Activated T-helper 1 cell treated with anti-CD3 and anti-CD28 coated beads, Interleukin-12 subunit alpha, Interleukin-12 subunit beta, Interleukin-2, Interleukin-4 antibody, amounts not matched to agents 30 ng/mL and 10 ng/mL and 1 ng/mL, durations not matched to agents 14 hours and 24 hours and 36 hours (primary cell): ENCODE measurements at regions of chr12 and their contacts with region 1.

Region 1: DNA sequence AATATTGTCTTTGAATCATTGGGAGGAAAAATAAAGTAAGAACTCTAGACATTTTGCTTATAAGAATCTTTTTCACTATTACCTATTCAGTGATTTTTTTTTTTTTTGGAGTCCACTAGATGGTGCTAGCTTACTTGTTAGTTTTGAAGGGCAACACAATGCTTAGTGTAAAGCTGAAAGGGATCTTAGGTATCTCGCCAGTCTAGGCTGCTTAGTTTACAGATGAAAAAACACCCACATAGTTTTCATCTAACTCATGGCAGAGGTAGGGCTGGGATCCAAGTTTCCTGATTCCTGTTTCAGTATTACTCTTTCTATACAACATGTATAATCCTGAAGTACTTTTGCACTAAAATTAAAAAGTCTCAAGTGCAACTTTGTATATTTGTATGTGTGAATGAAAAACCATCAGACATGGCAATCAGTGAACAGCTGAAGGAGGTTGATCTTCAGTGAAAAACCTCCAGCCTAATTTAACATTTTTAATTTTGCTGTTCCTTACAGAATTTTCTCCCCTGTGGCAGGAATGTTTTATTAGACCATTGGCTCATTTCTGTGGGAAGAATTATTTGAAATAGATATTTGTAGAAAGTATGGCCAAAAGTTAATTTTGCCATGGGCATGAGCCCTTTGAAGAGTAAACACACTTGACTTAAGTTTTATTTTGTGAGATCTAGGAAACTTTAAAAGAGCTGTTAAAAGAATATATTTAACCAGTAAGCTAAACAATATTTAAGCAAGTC is 40.7 kb downstream of the LRRIQ1 start:
- DNase-seq: no peak
- H3K4me3 Mint-ChIP-seq: no peak overlapping the region
- H3K27ac Mint-ChIP-seq: no peak overlapping the region
- H3K4me1 Mint-ChIP-seq: no peaks in the 10 kb centered on the region
- H3K27me3 Mint-ChIP-seq: no peaks in the 10 kb centered on the region

Region 2: DNA sequence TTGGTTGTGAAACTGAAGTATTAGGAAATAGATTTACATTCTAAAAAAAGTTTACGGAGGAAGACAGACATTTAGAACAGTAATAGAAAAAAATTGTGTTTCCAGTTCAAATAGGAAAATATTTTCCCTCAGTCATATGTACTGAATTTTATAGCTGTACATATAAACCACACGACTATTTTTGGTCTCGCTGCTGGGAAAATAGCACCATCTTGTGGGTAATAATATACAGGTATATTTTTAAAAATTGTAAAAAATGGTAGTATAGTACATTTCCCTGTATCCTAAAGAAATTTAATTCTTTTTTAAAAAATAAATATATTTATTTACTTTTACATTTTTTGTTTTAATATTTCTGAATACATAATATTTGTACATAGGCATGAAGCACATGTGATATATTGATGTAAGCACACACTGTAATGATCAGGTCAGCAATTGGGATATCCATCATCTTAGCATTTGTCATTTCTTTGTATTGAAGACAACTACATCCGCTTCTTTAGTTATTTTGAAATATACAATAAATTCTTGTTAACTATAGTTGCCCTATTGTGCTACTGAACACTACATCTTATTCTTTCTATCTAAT is 371.8 kb after region 1 on chr12:
- intact Hi-C with region 1: loop called (anchors 5 kb)
- DNase-seq: no peak
- H3K4me3 Mint-ChIP-seq: no peak overlapping the region
- H3K27ac Mint-ChIP-seq: no peak overlapping the region
- H3K4me1 Mint-ChIP-seq: no peaks in the 10 kb centered on the region
- H3K27me3 Mint-ChIP-seq: no peaks in the 10 kb centered on the region